ENCODE measurements at regions of chr2 and their contacts with region 1.

Region 1: DNA sequence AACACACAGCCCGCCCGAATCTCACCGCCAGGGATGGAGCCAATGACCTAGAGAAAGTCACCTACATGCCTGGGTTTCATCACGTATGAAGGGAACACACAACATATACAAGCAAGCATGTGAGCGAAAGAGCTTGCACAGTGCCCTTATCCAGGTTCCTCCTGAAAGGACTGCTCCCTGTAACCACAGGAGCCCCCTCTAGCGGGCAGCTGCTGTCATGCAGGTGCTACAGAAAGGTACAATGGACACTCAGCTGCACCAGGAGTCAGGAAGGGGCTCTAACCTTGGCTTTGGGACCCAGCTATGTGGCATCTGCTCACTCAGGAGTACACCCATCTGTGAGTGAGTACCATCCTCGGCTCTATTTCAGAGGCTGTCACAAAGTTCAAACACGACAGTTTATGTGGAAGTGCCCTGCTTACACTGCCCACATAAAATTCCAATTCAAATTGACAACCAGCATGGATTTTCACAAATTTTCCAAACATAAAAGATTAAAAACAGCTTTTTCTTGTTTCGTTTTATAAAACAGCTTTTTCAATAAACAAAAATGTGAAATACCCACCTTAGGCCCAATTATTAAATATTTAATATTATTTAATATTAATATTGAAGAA is 3.5 kb downstream of the NDUFA10 start:
- DNase-seq: no peak
- H3K4me3 ChIP-seq: no peak overlapping the region
- H3K27me3 ChIP-seq: no peaks in the 10 kb centered on the region
- CTCF ChIP-seq: peak; percentile 96

Region 2: GRCh38 chr2:239997686-239998405 is 23.8 kb before region 1 on chr2:
- CTCF ChIA-PET with region 1: interaction called, 23 read pairs
- POLR2A ChIA-PET with region 1: no interaction called
- DNase-seq: no peak
- H3K4me3 ChIP-seq: no peak overlapping the region
- H3K27me3 ChIP-seq: no peaks in the 10 kb centered on the region
- CTCF ChIP-seq: no peak

Region 3: GRCh38 chr2:240060977-240061591 is 39.5 kb after region 1 on chr2:
- CTCF ChIA-PET with region 1: interaction called, 3 read pairs
- POLR2A ChIA-PET with region 1: interaction called, 11 read pairs
- DNase-seq: peak; percentile 4
- H3K4me3 ChIP-seq: no peak overlapping the region
- H3K27me3 ChIP-seq: peaks cover 3% of the 10 kb centered on the region
- CTCF ChIP-seq: peak; percentile 64

Region 4: DNA sequence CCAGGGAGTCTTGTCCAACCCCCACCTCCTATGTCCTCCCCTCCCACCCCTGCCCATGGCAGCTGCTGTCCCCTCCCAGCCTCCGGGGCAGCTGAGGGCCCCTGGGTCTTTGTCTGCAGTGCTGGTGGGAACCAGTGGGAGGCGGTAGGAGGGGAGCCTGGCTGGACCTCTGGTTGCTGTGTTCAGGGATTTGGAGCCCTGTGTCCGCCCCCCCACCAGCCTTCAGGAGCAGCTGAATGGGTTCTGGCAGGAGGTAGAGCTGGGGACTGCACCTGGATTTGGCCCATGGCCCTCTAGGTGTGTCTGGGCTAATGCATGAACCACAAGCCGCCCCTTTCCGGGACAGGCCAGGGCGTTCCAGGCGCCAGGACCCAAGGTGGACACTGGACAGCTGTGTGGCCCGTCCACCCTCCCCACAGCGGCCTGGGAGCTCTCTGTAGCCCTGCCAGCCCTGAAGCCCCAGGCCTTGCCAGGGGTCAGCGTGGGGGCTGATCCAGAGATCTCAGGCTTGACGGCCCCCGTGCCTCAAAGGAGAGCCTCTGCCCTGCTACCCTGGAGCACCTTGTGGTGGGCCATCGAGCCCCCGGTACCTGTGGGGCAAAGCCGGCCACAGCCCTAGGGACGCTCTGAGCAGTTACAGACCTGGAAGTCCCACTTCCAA is 439.3 kb after region 1 on chr2:
- CTCF ChIA-PET with region 1: no interaction called
- POLR2A ChIA-PET with region 1: interaction called, 10 read pairs
- DNase-seq: no peak
- H3K4me3 ChIP-seq: no peak overlapping the region
- H3K27me3 ChIP-seq: no peaks in the 10 kb centered on the region
- CTCF ChIP-seq: no peak; the same call in 1 of the 2 replicates

Measured in BJ (cell line).